ENCODE measurements at regions of chr9 and their contacts with region 1.

Region 1: DNA sequence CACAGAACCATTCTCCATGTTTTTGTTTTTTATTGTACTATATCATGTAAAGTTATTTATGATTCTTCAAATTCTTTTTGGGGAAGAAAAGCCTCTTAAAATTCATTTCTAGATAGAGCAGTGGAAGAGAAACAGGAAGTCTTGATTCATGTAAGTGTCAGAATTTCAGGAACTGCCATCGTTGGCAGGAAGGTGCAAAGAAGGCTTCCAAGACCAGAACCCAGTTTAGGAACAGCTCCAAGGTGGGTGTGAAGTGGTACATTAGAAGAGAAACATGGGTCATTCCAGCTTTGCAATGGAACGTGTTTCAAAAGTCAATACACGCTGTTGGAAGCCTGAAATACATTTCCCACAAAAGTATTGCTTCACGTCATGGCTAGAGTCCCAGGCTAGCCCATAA is 14.8 kb downstream of the SAXO1 start:
- DNase-seq: no peak
- ATAC-seq: no peak
- H3K4me3 ChIP-seq: no peak overlapping the region
- H3K27ac ChIP-seq: no peak overlapping the region
- H3K4me1 ChIP-seq: peaks cover 0 to 3% (median under 1%) of the 10 kb centered on the region in 9 donors
- H3K27me3 ChIP-seq: no peaks in the 10 kb centered on the region
- CTCF ChIP-seq: no peak

Region 2: DNA sequence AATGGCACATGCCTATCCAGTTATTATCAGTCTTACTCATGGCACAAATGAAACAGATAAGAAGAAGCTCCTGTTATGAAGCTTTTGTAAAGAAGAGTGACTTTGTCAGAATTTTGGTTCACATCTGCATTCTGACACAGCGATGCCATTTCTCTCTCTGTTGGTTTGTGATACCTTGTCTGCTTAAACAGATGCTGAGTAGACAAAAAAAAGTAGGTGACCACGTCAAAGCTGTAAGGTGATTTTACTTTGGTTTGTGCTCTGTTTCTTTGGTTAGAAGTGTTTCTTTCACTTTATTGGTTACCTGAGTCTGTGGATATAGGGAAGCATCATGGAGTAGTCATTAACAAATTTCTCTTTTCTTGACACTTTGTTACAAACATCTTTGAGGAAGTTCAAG is 966.6 kb before region 1 on chr9:
- intact Hi-C with region 1: no loop called
- DNase-seq: no peak
- ATAC-seq: no peak
- H3K4me3 ChIP-seq: no peak overlapping the region
- H3K27ac ChIP-seq: no peak overlapping the region
- H3K4me1 ChIP-seq: no peaks in the 10 kb centered on the region
- H3K27me3 ChIP-seq: no peaks in the 10 kb centered on the region
- CTCF ChIP-seq: no peak

Region 3: DNA sequence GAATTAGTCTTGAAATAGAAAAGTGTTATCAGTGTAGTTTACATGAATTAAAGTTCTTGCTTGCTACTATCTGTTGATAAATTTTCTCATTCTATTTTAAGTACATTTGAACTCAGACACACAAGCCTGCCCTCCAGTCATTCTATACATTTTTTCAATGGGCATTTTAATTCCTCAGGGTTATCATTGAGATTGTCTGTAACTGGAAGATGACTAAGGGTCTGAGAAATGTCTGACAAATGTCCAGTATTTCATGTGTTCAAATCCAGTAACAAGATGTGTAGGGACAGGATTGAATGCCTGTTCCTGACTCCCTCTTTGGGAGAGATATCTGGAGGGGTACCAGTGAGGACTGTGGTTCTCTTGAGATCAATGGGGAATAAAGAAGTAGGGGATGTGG is 768.1 kb before region 1 on chr9:
- intact Hi-C with region 1: loop called in 5 of 10 experiments (anchors 5 to 10 kb)
- DNase-seq: no peak
- ATAC-seq: no peak
- H3K4me3 ChIP-seq: no peak overlapping the region
- H3K27ac ChIP-seq: no peak overlapping the region
- H3K4me1 ChIP-seq: peaks cover 0 to 3% (median 0%) of the 10 kb centered on the region in 9 donors
- H3K27me3 ChIP-seq: no peaks in the 10 kb centered on the region
- CTCF ChIP-seq: no peak

Region 4: GRCh38 chr9:18255158-18255629 is 763.0 kb before region 1 on chr9:
- intact Hi-C with region 1: loop called in 6 of 10 experiments (anchors 5 to 10 kb)
- DNase-seq: peak; percentile 70 to 83
- ATAC-seq: peak; percentile 47 to 91 (median 84)
- H3K4me3 ChIP-seq: no peak overlapping the region
- H3K27ac ChIP-seq: no peak overlapping the region
- H3K4me1 ChIP-seq: peaks cover 0 to 21% (median 4%) of the 10 kb centered on the region in 9 donors
- H3K27me3 ChIP-seq: no peaks in the 10 kb centered on the region
- CTCF ChIP-seq: peak; percentile 88 to 98 (median 97)

Region 5: GRCh38 chr9:18260521-18260920 is 757.7 kb before region 1 on chr9:
- intact Hi-C with region 1: loop called in 5 of 10 experiments (anchors 5 to 10 kb)
- DNase-seq: no peak
- ATAC-seq: no peak
- H3K4me3 ChIP-seq: no peak overlapping the region
- H3K27ac ChIP-seq: peak overlapping the region in 4 of 10 donors; percentile 2 to 66 (median 50)
- H3K4me1 ChIP-seq: peaks cover 0 to 29% (median 3%) of the 10 kb centered on the region in 9 donors
- H3K27me3 ChIP-seq: no peaks in the 10 kb centered on the region
- CTCF ChIP-seq: no peak

Region 6: GRCh38 chr9:18806232-18807080 is 211.7 kb before region 1 on chr9:
- intact Hi-C with region 1: loop called in 1 of 10 experiments (anchors 10 kb)
- DNase-seq: no peak
- ATAC-seq: no peak
- H3K4me3 ChIP-seq: no peak overlapping the region
- H3K27ac ChIP-seq: no peak overlapping the region
- H3K4me1 ChIP-seq: no peaks in the 10 kb centered on the region
- H3K27me3 ChIP-seq: no peaks in the 10 kb centered on the region
- CTCF ChIP-seq: no peak

Region 7: GRCh38 chr9:19085295-19085694 is 67.1 kb after region 1 on chr9:
- intact Hi-C with region 1: no loop called
- DNase-seq: no peak
- ATAC-seq: no peak
- H3K4me3 ChIP-seq: no peak overlapping the region
- H3K27ac ChIP-seq: no peak overlapping the region
- H3K4me1 ChIP-seq: no peaks in the 10 kb centered on the region
- H3K27me3 ChIP-seq: no peaks in the 10 kb centered on the region
- CTCF ChIP-seq: peak in 7 of 9 donors; percentile 7 to 47 (median 38)